Endothelial cell of umbilical vein (primary cell): ENCODE measurements at regions of chr13 and their contacts with region 1.

Region 1: GRCh38 chr13:24540236-24541126 is 27.9 kb upstream of the PARP4 start:
- DNase-seq: peak; percentile 13
- H3K4me3 ChIP-seq: no peak overlapping the region
- H3K27ac ChIP-seq: no peak overlapping the region
- H3K4me1 ChIP-seq: peaks cover 3% of the 10 kb centered on the region
- H3K27me3 ChIP-seq: peaks cover 9 to 35% of the 10 kb centered on the region in 2 experiments
- CTCF ChIP-seq: peak; percentile 48 to 66
- POLR2A ChIP-seq: no peak

Region 2: GRCh38 chr13:24502533-24503378 is 37.7 kb before region 1 on chr13:
- CTCF ChIA-PET with region 1: no interaction called
- POLR2A ChIA-PET with region 1: no interaction called
- dilution Hi-C with region 1: no loop called
- intact Hi-C with region 1: loop called (anchors 5 kb)
- DNase-seq: peak; percentile 45
- H3K4me3 ChIP-seq: no peak overlapping the region
- H3K27ac ChIP-seq: peak overlapping the region; percentile 26
- H3K4me1 ChIP-seq: peaks cover 27% of the 10 kb centered on the region
- H3K27me3 ChIP-seq: no peaks in the 10 kb centered on the region
- CTCF ChIP-seq: no peak
- POLR2A ChIP-seq: no peak

Region 3: GRCh38 chr13:24512197-24512907 is 28.1 kb before region 1 on chr13 and contains the start of gene PARP4:
- CTCF ChIA-PET with region 1: interaction called, 7 read pairs
- POLR2A ChIA-PET with region 1: no interaction called
- dilution Hi-C with region 1: no loop called
- intact Hi-C with region 1: loop called (anchors 2 kb)
- DNase-seq: peak; percentile 90
- H3K4me3 ChIP-seq: peak within 1 kb of the TSS; percentile 38 to 65 (median 62)
- H3K27ac ChIP-seq: peak within 1 kb of the TSS; percentile 90
- H3K4me1 ChIP-seq: peaks cover 19% of the 10 kb centered on the region
- H3K27me3 ChIP-seq: no peaks in the 10 kb centered on the region
- CTCF ChIP-seq: no peak
- POLR2A ChIP-seq: peak; percentile 81
- total RNA-seq, gene PARP4: 64.3 and 71.7 TPM in 2 replicates